HEK293T (cell line): ENCODE measurements at regions of chr7 and their contacts with region 1.

Region 1: GRCh38 chr7:76020031-76020714 is 25.8 kb upstream of the TMEM120A start:
- DNase-seq: peak; percentile 82

Region 2: GRCh38 chr7:75866489-75867389 is 153.4 kb before region 1 on chr7:
- CTCF ChIA-PET with region 1: interaction called, 32 read pairs
- POLR2A ChIA-PET with region 1: interaction called, 7 read pairs
- DNase-seq: peak; percentile 76

Region 3: DNA sequence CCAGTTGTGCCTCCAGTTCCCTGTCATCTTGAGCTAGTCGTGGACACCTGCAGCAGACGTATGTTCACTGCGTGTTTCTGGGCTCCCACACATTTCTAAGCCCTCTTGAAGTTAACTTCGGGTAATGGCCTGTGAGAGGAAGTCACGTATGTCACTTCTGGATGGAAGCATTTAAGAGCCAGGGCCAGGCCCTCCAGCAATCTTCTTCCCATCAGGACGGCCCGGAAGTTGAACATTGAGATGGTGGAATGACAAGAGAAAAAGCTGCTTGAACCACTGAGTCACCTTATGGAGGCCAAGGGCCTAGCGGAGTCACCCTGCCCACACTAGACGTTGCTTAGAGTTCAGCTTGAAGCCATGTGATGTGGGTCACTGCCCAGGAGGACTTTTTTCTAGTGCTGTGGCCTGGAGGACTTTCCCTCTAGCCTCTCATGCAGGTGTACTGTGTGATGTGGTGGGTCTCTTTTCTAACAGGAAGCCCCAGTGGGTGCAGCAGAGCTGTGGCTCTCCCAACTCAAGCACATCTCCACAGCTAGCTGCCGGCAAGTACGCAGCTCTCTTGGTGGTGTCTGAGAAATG is 91.8 kb before region 1 on chr7:
- CTCF ChIA-PET with region 1: no interaction called
- POLR2A ChIA-PET with region 1: no interaction called
- DNase-seq: no peak

Region 4: GRCh38 chr7:75966190-75966961 is 53.8 kb before region 1 on chr7:
- CTCF ChIA-PET with region 1: no interaction called
- POLR2A ChIA-PET with region 1: no interaction called
- DNase-seq: no peak

Region 5: GRCh38 chr7:76166404-76167255 is 146.5 kb after region 1 on chr7:
- CTCF ChIA-PET with region 1: no interaction called
- POLR2A ChIA-PET with region 1: no interaction called
- DNase-seq: peak; percentile 94